ENCODE measurements at regions of chr19 and their contacts with region 1.

Region 1: DNA sequence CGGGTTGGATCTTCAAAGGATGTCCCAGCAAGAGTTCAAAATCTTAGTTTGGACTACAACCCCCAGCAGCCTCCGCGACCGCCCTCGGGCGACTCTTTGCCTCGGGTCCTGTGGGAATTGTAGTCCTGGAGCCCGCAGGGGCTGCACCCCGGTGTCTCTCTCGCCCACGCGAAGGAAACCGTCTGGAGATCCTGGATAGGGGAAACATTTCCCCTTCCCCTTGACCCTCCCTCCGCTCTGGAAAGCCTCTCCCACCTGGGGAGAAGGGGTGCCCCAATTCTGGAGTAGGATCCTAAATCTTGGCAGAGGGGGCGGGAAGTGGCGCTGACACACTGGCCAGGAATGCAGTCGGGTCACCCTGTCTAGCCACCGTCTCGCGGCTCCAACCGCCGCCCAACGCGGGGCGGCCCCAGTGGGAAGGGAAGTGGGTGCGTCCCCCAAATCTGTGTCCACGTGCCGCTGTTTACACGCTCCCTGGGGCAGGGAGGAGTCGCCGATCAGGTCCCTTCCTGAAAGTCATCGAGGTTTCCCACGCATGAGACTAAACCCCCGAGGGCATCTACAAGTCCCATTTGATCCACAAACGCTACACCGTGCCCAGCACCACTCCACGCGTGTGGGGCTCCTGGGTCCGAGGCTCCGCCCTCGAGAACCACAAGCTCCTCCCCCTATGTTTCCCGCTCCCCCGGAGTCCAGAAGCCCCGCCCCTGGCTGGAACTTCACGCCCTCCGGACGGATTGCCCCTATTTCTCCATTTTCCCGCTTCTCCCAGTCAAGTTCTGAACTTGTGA is 761 bp upstream of the PPP1R13L start:
- DNase-seq: peak; percentile 62 to 88 (median 81)
- ATAC-seq: peak; percentile 75
- H3K4me3 ChIP-seq: peak overlapping the region; percentile 77
- H3K4me3 Mint-ChIP-seq: peak overlapping the region; percentile 91 to 99 (median 97)
- H3K27ac ChIP-seq: peak overlapping the region; percentile 71
- H3K27ac Mint-ChIP-seq: peak overlapping the region; percentile 90 to 99 (median 94)
- H3K4me1 ChIP-seq: peaks cover 16 to 25% of the 10 kb centered on the region in 2 donors
- H3K4me1 Mint-ChIP-seq: peaks cover 28 to 53% (median 32%) of the 10 kb centered on the region in 7 donors
- H3K27me3 ChIP-seq: peaks cover 10 to 18% of the 10 kb centered on the region in 2 donors
- H3K27me3 Mint-ChIP-seq: peaks cover 15 to 27% (median 21%) of the 10 kb centered on the region in 5 donors

Region 2: GRCh38 chr19:45001087-45001739 is 404.4 kb before region 1 on chr19 and contains the start of gene RELB:
- CTCF ChIA-PET with region 1: no interaction called
- POLR2A ChIA-PET with region 1: no interaction called
- intact Hi-C with region 1: loop called in 1 of 2 experiments (anchors 1 kb)
- DNase-seq: peak; percentile 90 to 100 (median 94)
- ATAC-seq: peak; percentile 75
- H3K4me3 ChIP-seq: peak within 1 kb of the TSS; percentile 92
- H3K4me3 Mint-ChIP-seq: peak within 1 kb of the TSS; percentile 91 to 100 (median 96)
- H3K27ac ChIP-seq: peak within 1 kb of the TSS; percentile 100
- H3K27ac Mint-ChIP-seq: peak within 1 kb of the TSS; percentile 93 to 100 (median 100)
- H3K4me1 ChIP-seq: peaks cover 8 to 13% of the 10 kb centered on the region in 2 donors
- H3K4me1 Mint-ChIP-seq: peaks cover 8 to 25% (median 14%) of the 10 kb centered on the region in 7 donors
- H3K27me3 ChIP-seq: no peaks in the 10 kb centered on the region
- H3K27me3 Mint-ChIP-seq: no peaks in the 10 kb centered on the region
- total RNA-seq, gene RELB: 30.7 to 87.3 (median 71.3) TPM

Region 3: DNA sequence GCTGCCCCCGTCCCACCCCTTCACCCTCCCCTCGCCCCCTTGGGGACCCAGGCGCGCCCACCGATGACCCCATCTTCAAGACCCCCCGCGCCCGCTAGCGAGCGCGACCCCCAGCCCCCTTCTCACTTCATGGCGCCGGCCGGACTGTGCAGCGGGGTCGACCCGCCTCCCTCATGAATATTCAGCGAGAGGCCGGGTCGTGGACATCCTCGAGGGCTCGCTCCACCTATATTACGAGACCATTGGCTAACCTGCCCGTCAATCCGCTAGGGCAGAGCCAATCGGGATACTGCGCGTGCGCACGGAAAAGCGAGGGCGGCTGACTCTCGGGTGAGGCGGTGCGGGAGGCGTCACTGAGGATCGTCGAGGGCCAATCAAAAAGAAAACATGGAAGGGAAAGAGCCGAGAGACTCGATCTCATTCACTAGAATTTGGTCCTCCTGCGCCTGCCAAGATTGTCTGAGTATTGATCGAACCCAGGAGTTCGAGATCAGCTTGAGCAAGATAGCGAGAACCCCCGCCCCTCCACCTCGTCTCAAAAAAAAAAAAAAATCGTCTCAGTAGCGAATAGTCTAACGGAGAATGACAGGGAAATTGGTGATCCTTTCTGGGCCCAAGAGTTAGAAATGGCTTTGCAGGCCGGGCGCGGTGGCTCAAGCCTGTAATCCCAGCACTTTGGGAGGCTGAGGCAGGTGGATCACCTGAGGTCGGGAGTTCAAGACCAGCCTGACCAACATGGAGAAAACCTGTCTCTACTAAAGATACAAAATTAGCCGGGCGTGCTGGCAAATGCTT is 35.0 kb before region 1 on chr19 and contains the start of gene ERCC2:
- CTCF ChIA-PET with region 1: no interaction called
- POLR2A ChIA-PET with region 1: interaction called, 7 read pairs
- intact Hi-C with region 1: loop called (anchors 1 kb)
- DNase-seq: peak; percentile 98 to 100 (median 99)
- ATAC-seq: peak; percentile 99
- H3K4me3 ChIP-seq: peak within 1 kb of the TSS; percentile 72
- H3K4me3 Mint-ChIP-seq: peak within 1 kb of the TSS; percentile 84 to 98 (median 95)
- H3K27ac ChIP-seq: peak within 1 kb of the TSS; percentile 67
- H3K27ac Mint-ChIP-seq: peak within 1 kb of the TSS; percentile 87 to 99 (median 98)
- H3K4me1 ChIP-seq: peaks cover 0 to 6% of the 10 kb centered on the region in 2 donors
- H3K4me1 Mint-ChIP-seq: peaks cover 5 to 21% (median 18%) of the 10 kb centered on the region in 7 donors
- H3K27me3 ChIP-seq: no peaks in the 10 kb centered on the region
- H3K27me3 Mint-ChIP-seq: peaks cover 0 to 2% (median 0%) of the 10 kb centered on the region in 5 donors
- total RNA-seq, gene ERCC2: 14.4 to 25.1 (median 19.2) TPM

Region 4: GRCh38 chr19:45478454-45479238 is 73.0 kb after region 1 on chr19:
- CTCF ChIA-PET with region 1: interaction called, 5 read pairs
- POLR2A ChIA-PET with region 1: interaction called, 5 read pairs
- intact Hi-C with region 1: loop called (anchors 1 kb)
- DNase-seq: peak; percentile 77 to 94 (median 91)
- ATAC-seq: peak; percentile 62
- H3K4me3 ChIP-seq: peak overlapping the region; percentile 78
- H3K4me3 Mint-ChIP-seq: peak overlapping the region; percentile 62 to 96 (median 79)
- H3K27ac ChIP-seq: peak overlapping the region; percentile 94
- H3K27ac Mint-ChIP-seq: peak overlapping the region; percentile 95 to 100 (median 99)
- H3K4me1 ChIP-seq: peaks cover 7 to 11% of the 10 kb centered on the region in 2 donors
- H3K4me1 Mint-ChIP-seq: peaks cover 23 to 43% (median 33%) of the 10 kb centered on the region in 7 donors
- H3K27me3 ChIP-seq: no peaks in the 10 kb centered on the region
- H3K27me3 Mint-ChIP-seq: peaks cover 0 to 38% (median 6%) of the 10 kb centered on the region in 5 donors

Region 5: DNA sequence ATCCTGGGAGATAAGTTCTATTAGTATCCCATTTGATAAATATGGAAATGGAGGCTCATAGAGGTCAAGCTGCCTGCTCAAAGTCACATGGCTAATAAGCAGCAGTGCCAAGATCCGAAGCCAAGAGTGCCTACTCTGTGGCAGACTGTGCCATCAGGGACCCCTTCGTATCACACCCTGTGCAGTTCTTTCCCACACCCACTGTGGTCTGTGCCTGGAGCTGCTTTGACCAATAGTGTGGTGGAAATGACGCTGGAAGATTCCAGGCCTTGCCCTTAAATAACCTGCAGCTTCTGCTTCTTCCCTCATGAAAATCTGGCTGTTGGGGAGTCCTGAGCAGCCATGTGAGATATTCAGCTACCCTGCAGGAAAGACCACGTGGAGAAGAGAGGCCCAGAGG is 168.9 kb after region 1 on chr19:
- CTCF ChIA-PET with region 1: no interaction called
- POLR2A ChIA-PET with region 1: no interaction called
- intact Hi-C with region 1: no loop called
- DNase-seq: no peak
- ATAC-seq: no peak
- H3K4me3 ChIP-seq: no peak overlapping the region
- H3K4me3 Mint-ChIP-seq: no peak overlapping the region
- H3K27ac ChIP-seq: no peak overlapping the region
- H3K27ac Mint-ChIP-seq: no peak overlapping the region
- H3K4me1 ChIP-seq: no peaks in the 10 kb centered on the region
- H3K4me1 Mint-ChIP-seq: peaks cover 10 to 29% (median 17%) of the 10 kb centered on the region in 7 donors
- H3K27me3 ChIP-seq: no peaks in the 10 kb centered on the region
- H3K27me3 Mint-ChIP-seq: no peaks in the 10 kb centered on the region

Region 6: GRCh38 chr19:45584332-45585157 is 178.9 kb after region 1 on chr19 and contains the start of gene OPA3:
- CTCF ChIA-PET with region 1: no interaction called
- POLR2A ChIA-PET with region 1: no interaction called
- intact Hi-C with region 1: loop called (anchors 1 kb)
- DNase-seq: peak; percentile 88 to 100 (median 99)
- ATAC-seq: peak; percentile 92
- H3K4me3 ChIP-seq: peak within 1 kb of the TSS; percentile 85
- H3K4me3 Mint-ChIP-seq: peak within 1 kb of the TSS; percentile 90 to 99 (median 94)
- H3K27ac ChIP-seq: peak within 1 kb of the TSS; percentile 99
- H3K27ac Mint-ChIP-seq: peak within 1 kb of the TSS; percentile 97 to 100 (median 99)
- H3K4me1 ChIP-seq: peaks cover 6 to 10% of the 10 kb centered on the region in 2 donors
- H3K4me1 Mint-ChIP-seq: peaks cover 0 to 28% (median 20%) of the 10 kb centered on the region in 7 donors
- H3K27me3 ChIP-seq: no peaks in the 10 kb centered on the region
- H3K27me3 Mint-ChIP-seq: peaks cover 5 to 9% (median 7%) of the 10 kb centered on the region in 5 donors
- total RNA-seq, gene OPA3: 7.8 to 14.3 (median 9.0) TPM

Region 7: DNA sequence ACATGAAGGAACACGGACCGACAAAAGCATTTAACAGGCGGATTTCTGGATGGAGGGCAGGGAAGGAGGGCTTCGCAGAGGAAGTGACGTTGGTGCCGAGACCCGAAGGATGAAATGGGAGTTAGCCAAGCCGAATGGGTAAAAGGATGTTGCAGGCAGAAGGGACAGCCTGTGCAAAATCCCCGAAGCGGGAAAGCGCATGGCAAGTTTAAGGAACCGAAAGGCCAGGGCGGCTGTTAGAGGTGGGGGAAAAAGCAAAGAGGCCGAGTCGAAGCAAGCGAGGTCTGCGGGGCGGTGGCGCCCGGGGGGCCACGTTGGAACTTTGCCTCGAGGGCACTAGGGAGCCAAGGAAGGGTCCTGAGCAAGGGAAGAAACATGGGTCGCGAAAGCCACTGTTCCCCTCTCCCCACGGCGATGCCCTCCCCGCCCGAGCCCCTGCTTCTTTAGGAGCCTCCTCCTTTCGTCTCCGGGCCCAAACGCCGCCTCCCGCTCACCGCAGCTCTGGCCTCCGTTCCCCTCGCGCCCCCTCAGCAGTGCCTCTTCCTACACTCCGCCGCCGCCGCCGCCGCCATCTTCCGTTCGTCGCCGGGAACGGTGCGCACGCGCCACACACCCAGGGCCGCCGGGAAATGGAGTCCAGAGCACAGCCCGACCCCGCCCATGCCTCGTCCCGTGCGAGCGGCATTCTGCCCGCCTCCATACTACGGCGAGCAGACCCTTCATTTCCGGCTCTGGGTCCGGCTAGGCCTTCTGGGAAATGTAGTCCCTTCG is 457.1 kb after region 1 on chr19 and contains the start of gene SYMPK:
- CTCF ChIA-PET with region 1: no interaction called
- POLR2A ChIA-PET with region 1: no interaction called
- intact Hi-C with region 1: loop called in 1 of 2 experiments (anchors 1 kb)
- DNase-seq: peak; percentile 93 to 99 (median 99)
- ATAC-seq: peak; percentile 99
- H3K4me3 ChIP-seq: peak within 1 kb of the TSS; percentile 95
- H3K4me3 Mint-ChIP-seq: peak within 1 kb of the TSS; percentile 90 to 100 (median 96)
- H3K27ac ChIP-seq: peak within 1 kb of the TSS; percentile 86
- H3K27ac Mint-ChIP-seq: peak within 1 kb of the TSS; percentile 84 to 99 (median 95)
- H3K4me1 ChIP-seq: peaks cover 12 to 15% of the 10 kb centered on the region in 2 donors
- H3K4me1 Mint-ChIP-seq: peaks cover 29 to 37% (median 36%) of the 10 kb centered on the region in 7 donors
- H3K27me3 ChIP-seq: peaks cover 0 to 4% of the 10 kb centered on the region in 2 donors
- H3K27me3 Mint-ChIP-seq: peaks cover 6 to 39% (median 21%) of the 10 kb centered on the region in 5 donors
- total RNA-seq, gene SYMPK: 81.3 to 110 (median 96.4) TPM

Region 8: DNA sequence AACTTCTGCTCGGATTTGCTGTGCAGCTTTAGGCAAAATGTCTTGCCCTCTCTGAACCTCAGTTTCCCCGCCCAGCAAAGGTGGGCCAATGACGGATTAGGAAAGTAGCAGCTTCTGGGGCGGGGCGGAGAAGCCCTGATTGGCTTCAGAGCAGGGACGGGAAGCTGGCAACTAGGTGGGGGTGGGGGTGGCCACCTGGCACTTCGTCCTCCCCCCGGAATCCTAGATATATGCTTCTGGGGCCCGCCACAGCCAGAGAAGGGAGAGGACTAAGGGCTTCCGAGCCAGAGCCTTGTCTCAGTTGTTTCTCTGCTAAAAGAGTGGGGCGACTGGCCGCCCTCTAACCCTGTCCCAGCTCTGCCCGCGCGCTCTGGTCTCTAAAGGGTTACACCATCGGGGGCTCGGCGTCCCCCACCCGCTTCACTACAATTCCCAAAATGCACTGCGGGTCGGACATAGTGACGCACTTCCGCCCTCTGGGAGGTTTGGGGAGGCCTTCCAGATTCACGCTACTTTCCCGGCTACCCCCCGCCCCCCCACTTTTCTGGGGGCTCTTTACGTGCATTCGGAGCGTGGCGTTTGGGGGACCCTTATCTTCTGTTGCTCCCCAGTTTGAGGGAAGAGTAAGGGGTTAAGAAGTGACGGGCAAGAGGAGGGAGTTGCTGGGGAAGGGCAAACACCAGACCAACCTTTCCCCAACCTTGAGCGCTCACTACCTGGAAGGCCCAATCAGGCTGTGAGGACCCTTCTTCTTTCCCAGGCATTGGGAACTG is 481.0 kb after region 1 on chr19:
- CTCF ChIA-PET with region 1: no interaction called
- POLR2A ChIA-PET with region 1: no interaction called
- intact Hi-C with region 1: no loop called
- DNase-seq: peak; percentile 76 to 93 (median 88)
- ATAC-seq: peak; percentile 85
- H3K4me3 ChIP-seq: peak overlapping the region; percentile 99
- H3K4me3 Mint-ChIP-seq: peak overlapping the region; percentile 93 to 99 (median 97)
- H3K27ac ChIP-seq: peak overlapping the region; percentile 86
- H3K27ac Mint-ChIP-seq: peak overlapping the region; percentile 92 to 99 (median 97)
- H3K4me1 ChIP-seq: peaks cover 15 to 34% of the 10 kb centered on the region in 2 donors
- H3K4me1 Mint-ChIP-seq: peaks cover 10 to 32% (median 19%) of the 10 kb centered on the region in 7 donors
- H3K27me3 ChIP-seq: no peaks in the 10 kb centered on the region
- H3K27me3 Mint-ChIP-seq: no peaks in the 10 kb centered on the region